ENCODE measurements at regions of chr3 and their contacts with region 1.

Region 1: GRCh38 chr3:71725279-71725991 is at the start of gene EIF4E3:
- DNase-seq: peak in 1 of 2 experiments; percentile 72
- H3K4me3 ChIP-seq: peak within 1 kb of the TSS; percentile 67 to 84 (median 76)
- H3K27ac ChIP-seq: peak within 1 kb of the TSS; percentile 20; the same call in 1 of the 2 replicates
- H3K4me1 ChIP-seq: peaks cover 8 to 24% (median 10%) of the 10 kb centered on the region in 4 experiments
- H3K27me3 ChIP-seq: peaks cover 3 to 19% (median 16%) of the 10 kb centered on the region in 4 experiments
- CTCF ChIP-seq: no peak
- EP300 ChIP-seq: no peak
- POLR2A ChIP-seq: no peak
- RAD21 ChIP-seq: no peak
- total RNA-seq, gene EIF4E3: 14.3 and 17.0 TPM in 2 replicates

Region 2: GRCh38 chr3:71673486-71673885 is 51.9 kb before region 1 on chr3:
- CTCF ChIA-PET with region 1: no interaction called
- POLR2A ChIA-PET with region 1: no interaction called
- DNase-seq: no peak
- H3K4me3 ChIP-seq: no peak overlapping the region
- H3K27ac ChIP-seq: no peak overlapping the region
- H3K4me1 ChIP-seq: peaks cover 0 to 4% (median 2%) of the 10 kb centered on the region in 4 experiments; a peak in 4 of 7 replicates
- H3K27me3 ChIP-seq: no peaks in the 10 kb centered on the region
- CTCF ChIP-seq: no peak
- EP300 ChIP-seq: no peak
- POLR2A ChIP-seq: no peak
- RAD21 ChIP-seq: no peak

Region 3: DNA sequence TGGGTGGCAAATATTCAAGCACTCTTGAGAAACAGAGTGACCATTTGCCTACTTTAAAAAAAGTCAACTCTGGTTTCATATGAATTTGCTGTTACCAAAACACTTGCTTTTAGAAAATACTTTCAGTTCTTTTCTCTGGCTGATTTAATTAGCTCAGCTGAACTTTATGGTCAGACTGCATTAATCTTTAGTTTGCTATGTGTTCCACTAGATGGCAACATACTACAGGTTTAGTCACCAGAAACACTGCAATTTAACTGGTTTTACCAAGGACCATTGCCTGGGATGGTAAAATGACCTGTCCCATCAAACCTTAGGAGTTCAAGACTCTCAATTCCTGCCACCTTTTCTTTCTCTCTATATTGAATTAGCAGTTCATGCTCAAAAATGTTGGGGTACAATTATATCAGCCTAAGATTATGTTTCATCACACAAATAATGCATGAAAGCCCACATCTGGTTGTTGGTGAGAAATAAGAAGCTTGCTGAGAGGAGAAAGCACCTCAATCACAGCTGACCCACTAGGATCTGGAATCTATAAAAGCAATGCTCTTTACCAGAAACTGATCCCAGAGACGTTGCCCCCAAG is 14.4 kb before region 1 on chr3:
- CTCF ChIA-PET with region 1: interaction called, 18 read pairs
- POLR2A ChIA-PET with region 1: interaction called, 5 read pairs
- DNase-seq: no peak
- H3K4me3 ChIP-seq: no peak overlapping the region
- H3K27ac ChIP-seq: no peak overlapping the region
- H3K4me1 ChIP-seq: no peaks in the 10 kb centered on the region
- H3K27me3 ChIP-seq: no peaks in the 10 kb centered on the region
- CTCF ChIP-seq: peak in 2 of 3 experiments; percentile 65 to 74; a peak in 3 of 4 replicates
- EP300 ChIP-seq: no peak
- POLR2A ChIP-seq: no peak
- RAD21 ChIP-seq: peak; percentile 90 to 94

Region 4: GRCh38 chr3:71744738-71745137 is 19.3 kb after region 1 on chr3:
- CTCF ChIA-PET with region 1: interaction called, 16 read pairs
- POLR2A ChIA-PET with region 1: no interaction called
- DNase-seq: no peak
- H3K4me3 ChIP-seq: no peak overlapping the region
- H3K27ac ChIP-seq: no peak overlapping the region
- H3K4me1 ChIP-seq: no peaks in the 10 kb centered on the region
- H3K27me3 ChIP-seq: no peaks in the 10 kb centered on the region; a peak in 1 of 7 replicates
- CTCF ChIP-seq: no peak
- EP300 ChIP-seq: no peak
- POLR2A ChIP-seq: no peak
- RAD21 ChIP-seq: no peak

Region 5: GRCh38 chr3:71751602-71752001 is 26.2 kb after region 1 on chr3:
- CTCF ChIA-PET with region 1: interaction called, 16 read pairs
- POLR2A ChIA-PET with region 1: interaction called, 5 read pairs
- DNase-seq: no peak
- H3K4me3 ChIP-seq: no peak overlapping the region
- H3K27ac ChIP-seq: no peak overlapping the region
- H3K4me1 ChIP-seq: peaks cover 0 to 12% (median 5%) of the 10 kb centered on the region in 4 experiments
- H3K27me3 ChIP-seq: peaks cover 15 to 47% (median 39%) of the 10 kb centered on the region in 4 experiments
- CTCF ChIP-seq: no peak
- EP300 ChIP-seq: no peak
- POLR2A ChIP-seq: no peak
- RAD21 ChIP-seq: no peak

Region 6: DNA sequence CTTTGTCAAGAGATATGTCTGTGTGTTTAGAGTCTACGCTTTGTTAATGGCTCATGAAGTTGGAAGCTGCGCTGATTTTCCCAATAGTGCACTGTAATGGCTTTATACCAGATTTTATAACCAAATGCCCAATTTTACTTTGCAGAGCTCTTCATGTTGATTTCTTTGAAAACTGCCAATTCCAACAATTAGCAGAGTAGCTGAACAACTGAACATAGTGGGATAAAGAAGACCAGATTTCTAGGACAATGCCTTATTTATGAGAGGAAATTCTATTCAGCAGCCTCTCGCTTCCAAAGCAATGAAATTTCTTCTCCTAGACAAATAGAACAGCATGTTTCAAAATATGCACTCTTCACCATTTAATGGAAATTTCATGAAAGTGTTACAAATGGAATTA is 126.4 kb after region 1 on chr3:
- CTCF ChIA-PET with region 1: interaction called, 58 read pairs
- POLR2A ChIA-PET with region 1: no interaction called
- DNase-seq: no peak
- H3K4me3 ChIP-seq: no peak overlapping the region
- H3K27ac ChIP-seq: no peak overlapping the region
- H3K4me1 ChIP-seq: no peaks in the 10 kb centered on the region
- H3K27me3 ChIP-seq: no peaks in the 10 kb centered on the region
- CTCF ChIP-seq: no peak
- EP300 ChIP-seq: no peak
- POLR2A ChIP-seq: no peak
- RAD21 ChIP-seq: no peak

Region 7: GRCh38 chr3:71859123-71859519 is 133.7 kb after region 1 on chr3:
- CTCF ChIA-PET with region 1: interaction called, 58 read pairs
- POLR2A ChIA-PET with region 1: interaction called, 4 read pairs
- DNase-seq: no peak
- H3K4me3 ChIP-seq: no peak overlapping the region
- H3K27ac ChIP-seq: no peak overlapping the region
- H3K4me1 ChIP-seq: peaks cover 7 to 13% (median 9%) of the 10 kb centered on the region in 4 experiments
- H3K27me3 ChIP-seq: no peaks in the 10 kb centered on the region
- CTCF ChIP-seq: peak in 2 of 3 experiments; percentile 77 to 82; a peak in 3 of 4 replicates
- EP300 ChIP-seq: no peak
- POLR2A ChIP-seq: no peak
- RAD21 ChIP-seq: peak; percentile 93 to 97